Right cardiac atrium (tissue), 5 donors: ENCODE measurements at regions of chr18 and their contacts with region 1.

Region 1: DNA sequence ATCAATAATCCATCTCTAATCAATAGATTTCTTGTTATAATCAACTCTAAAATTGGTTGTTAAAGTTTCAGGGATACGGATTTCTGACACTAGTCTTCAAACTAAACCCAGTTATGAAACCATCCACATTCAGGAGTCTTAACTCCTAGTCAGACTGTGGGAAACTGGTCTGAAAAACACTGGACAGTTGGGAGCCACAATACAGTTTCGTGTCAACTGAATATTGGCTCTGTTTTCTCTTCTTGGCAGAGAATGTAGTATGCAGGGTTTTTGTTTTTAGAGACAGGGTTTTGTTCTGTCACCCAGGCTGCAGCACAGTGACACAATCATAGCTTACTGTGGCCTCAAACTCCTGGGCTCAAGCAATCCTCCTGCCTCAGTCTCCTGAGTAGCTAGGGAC is 123.1 kb downstream of the RTTN start:
- DNase-seq: no peak
- ATAC-seq: no peak
- H3K4me3 ChIP-seq: no peak overlapping the region
- H3K27ac ChIP-seq: no peak overlapping the region
- H3K4me1 ChIP-seq: no peaks in the 10 kb centered on the region
- H3K27me3 ChIP-seq: no peaks in the 10 kb centered on the region

Region 2: DNA sequence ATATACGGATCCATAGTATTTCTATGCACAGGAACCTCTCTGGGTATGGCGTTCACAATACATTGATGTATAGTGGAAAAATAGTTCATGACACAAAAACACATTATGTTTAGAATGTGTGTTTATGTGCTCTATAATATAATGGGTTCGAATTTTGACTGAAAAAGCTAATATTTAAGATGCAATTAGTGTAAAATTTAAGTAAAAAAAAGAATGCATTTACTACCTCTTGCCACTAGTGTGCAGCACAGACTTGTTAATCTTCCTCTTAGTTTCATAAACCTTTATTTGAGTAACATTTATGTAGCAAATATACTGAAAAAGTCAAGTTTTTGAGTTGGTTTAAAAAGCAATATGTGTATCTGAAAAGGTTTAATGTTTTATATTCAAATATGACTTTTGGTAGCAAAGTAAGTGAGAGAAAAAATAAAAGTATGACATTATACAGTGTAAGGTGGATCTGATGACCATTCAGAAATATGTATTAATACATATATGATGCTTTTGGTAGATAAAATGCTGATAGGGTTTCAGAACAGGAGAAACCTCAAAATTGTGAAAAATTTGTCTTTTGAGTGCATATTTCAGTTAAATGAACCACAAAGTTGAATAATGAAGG is 1235.1 kb before region 1 on chr18:
- intact Hi-C with region 1: loop called in 3 of 4 experiments (anchors 5 to 10 kb)
- DNase-seq: no peak
- ATAC-seq: no peak
- H3K4me3 ChIP-seq: no peak overlapping the region
- H3K27ac ChIP-seq: no peak overlapping the region
- H3K4me1 ChIP-seq: no peaks in the 10 kb centered on the region
- H3K27me3 ChIP-seq: no peaks in the 10 kb centered on the region

Region 3: DNA sequence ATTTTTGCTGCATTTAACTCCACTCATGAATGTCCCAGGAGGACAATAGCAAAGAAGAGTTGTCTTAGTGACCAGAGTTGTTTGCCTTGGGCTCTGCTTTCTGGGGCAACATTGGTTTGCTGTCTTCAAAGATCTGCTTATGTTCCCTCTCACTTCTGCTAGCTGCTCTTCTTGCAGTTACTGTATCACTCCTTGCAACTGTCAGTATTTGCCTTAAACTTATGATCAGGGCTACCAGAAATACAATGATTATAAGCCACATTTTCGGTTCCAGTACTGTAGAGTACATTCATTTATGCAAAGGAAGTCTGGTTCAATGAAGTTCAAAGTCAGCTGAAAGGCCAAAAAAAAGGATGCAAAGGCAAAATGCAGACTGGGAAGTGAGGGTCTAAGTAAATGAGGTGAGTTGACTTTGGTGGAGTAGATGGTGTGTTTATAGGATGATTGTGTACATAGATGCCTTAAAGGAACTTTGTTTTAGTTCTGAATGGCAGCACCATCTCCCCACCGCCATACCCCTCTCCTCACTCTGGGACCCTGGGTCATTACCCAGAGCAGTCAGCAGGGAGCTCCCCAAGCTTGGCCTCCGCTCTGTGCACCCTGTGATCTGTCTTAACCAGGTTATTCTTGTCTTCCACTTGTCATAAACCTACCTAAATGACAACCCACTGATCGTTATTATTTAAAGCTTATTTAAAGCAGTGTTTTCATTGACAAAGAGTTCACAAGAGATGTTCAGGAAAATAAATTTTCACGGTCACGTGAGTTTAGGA is 445.7 kb before region 1 on chr18:
- intact Hi-C with region 1: loop called in 1 of 4 experiments (anchors 10 kb)
- DNase-seq: no peak
- ATAC-seq: peak in 1 of 2 donors; percentile 73
- H3K4me3 ChIP-seq: no peak overlapping the region
- H3K27ac ChIP-seq: no peak overlapping the region
- H3K4me1 ChIP-seq: no peaks in the 10 kb centered on the region
- H3K27me3 ChIP-seq: no peaks in the 10 kb centered on the region